ENCODE measurements at regions of chr4 and their contacts with region 1.

Region 1: DNA sequence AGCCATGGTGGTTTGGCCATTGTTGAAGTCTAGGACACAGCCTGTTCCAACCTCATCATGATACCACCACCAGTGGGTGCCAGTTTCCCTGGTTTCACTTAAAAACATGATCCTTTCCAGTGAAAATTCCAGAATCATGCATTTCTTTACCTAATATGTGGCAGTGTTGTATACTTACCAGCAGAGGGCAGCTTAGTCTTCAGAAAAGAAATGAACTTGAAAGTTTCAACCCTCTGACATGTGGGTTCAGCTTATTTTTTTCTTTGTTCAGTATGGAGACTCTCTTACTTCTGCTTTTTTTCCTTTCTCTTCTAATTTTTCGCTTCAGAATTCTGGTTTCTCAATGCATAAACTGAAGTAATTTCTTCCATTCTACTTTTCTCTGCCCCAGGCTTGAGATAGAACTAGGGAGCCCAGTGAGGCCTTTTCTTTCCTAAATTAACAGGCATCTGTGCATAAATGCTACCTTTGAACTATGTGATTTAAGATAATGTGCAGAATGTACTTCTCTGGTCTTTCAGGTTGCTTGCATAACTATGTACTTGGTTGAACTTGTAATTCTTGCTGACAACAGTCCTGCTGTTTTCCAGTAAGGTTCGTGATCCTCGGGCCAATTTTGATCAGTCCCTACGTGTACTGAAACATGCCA is 10.7 kb downstream of the LIAS start:
- DNase-seq: peak; percentile 85
- ATAC-seq: peak; percentile 91
- H3K4me3 ChIP-seq: no peak overlapping the region
- H3K27ac ChIP-seq: no peak overlapping the region
- H3K4me1 ChIP-seq: peaks cover 13% of the 10 kb centered on the region; the same call in 1 of the 2 replicates
- H3K27me3 ChIP-seq: no peaks in the 10 kb centered on the region
- CTCF ChIP-seq: peak; percentile 97

Region 2: DNA sequence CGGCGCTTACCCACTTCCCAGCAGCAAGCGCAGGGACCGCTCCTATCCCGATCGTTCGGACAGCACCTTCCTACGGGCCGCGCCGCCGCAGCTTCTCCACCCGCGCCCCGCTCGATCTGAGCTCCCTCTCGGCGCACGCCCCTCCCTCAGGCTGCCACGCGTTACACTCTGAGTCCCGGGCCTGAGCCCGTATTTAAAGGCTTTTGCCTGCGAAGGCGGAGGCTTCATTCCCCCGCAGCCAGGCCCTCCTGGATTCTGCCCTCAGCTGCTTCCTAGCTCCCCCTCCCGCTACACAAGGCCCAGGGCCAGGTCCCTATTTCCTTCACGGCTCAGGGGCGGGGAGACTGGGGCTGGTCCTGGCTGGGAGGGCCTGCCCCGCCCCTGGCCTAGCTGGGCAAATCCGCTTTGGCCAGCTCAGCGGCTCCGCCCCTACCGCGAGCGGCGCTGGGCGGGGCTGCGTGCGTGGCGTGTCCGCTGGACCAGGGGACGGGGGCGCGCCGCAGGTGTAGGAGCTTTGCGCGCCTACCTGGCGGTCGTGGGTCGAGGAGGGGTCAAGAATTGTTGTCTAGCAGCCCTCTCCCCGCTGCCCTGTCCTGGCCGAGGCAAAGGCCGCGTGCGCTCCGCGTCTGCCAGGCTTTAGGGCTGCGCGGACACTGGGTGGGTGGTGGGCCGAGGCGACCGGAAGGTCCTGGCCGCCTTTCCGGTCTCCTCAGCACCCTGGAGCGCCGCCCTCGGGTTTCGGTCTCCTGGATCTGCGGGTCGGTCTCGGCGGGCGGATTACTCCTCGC is 57.9 kb after region 1 on chr4 and contains the start of gene UGDH:
- CTCF ChIA-PET with region 1: interaction called, 6 read pairs
- POLR2A ChIA-PET with region 1: interaction called, 3 read pairs
- intact Hi-C with region 1: loop called (anchors 5 kb)
- DNase-seq: peak; percentile 95
- ATAC-seq: peak; percentile 87
- H3K4me3 ChIP-seq: peak within 1 kb of the TSS; percentile 95
- H3K27ac ChIP-seq: peak within 1 kb of the TSS; percentile 89
- H3K4me1 ChIP-seq: peaks cover 20% of the 10 kb centered on the region
- H3K27me3 ChIP-seq: no peaks in the 10 kb centered on the region
- CTCF ChIP-seq: no peak
- total RNA-seq, gene UGDH: 50.0 and 53.4 TPM in 2 replicates

Region 3: GRCh38 chr4:39591290-39591689 is 121.7 kb after region 1 on chr4:
- CTCF ChIA-PET with region 1: no interaction called
- POLR2A ChIA-PET with region 1: no interaction called
- intact Hi-C with region 1: loop called (anchors 1 kb)
- DNase-seq: peak; percentile 72
- ATAC-seq: peak; percentile 66
- H3K4me3 ChIP-seq: no peak overlapping the region
- H3K27ac ChIP-seq: no peak overlapping the region
- H3K4me1 ChIP-seq: no peaks in the 10 kb centered on the region
- H3K27me3 ChIP-seq: no peaks in the 10 kb centered on the region
- CTCF ChIP-seq: peak; percentile 65

Region 4: GRCh38 chr4:39638354-39639240 is 169.0 kb after region 1 on chr4 and contains the start of gene SMIM14:
- CTCF ChIA-PET with region 1: interaction called, 8 read pairs
- POLR2A ChIA-PET with region 1: interaction called, 12 read pairs
- intact Hi-C with region 1: loop called (anchors 2 kb)
- DNase-seq: peak; percentile 96
- ATAC-seq: peak; percentile 89
- H3K4me3 ChIP-seq: peak within 1 kb of the TSS; percentile 98
- H3K27ac ChIP-seq: peak within 1 kb of the TSS; percentile 95
- H3K4me1 ChIP-seq: peaks cover 23% of the 10 kb centered on the region
- H3K27me3 ChIP-seq: no peaks in the 10 kb centered on the region
- CTCF ChIP-seq: no peak
- total RNA-seq, gene SMIM14: 3.3 and 4.8 TPM in 2 replicates

Region 5: GRCh38 chr4:39658756-39659155 is 189.2 kb after region 1 on chr4:
- CTCF ChIA-PET with region 1: no interaction called
- POLR2A ChIA-PET with region 1: no interaction called
- intact Hi-C with region 1: loop called (anchors 2 kb)
- DNase-seq: no peak
- ATAC-seq: no peak
- H3K4me3 ChIP-seq: no peak overlapping the region
- H3K27ac ChIP-seq: no peak overlapping the region
- H3K4me1 ChIP-seq: no peaks in the 10 kb centered on the region
- H3K27me3 ChIP-seq: no peaks in the 10 kb centered on the region
- CTCF ChIP-seq: peak; percentile 42; the same call in 1 of the 2 replicates

Region 6: DNA sequence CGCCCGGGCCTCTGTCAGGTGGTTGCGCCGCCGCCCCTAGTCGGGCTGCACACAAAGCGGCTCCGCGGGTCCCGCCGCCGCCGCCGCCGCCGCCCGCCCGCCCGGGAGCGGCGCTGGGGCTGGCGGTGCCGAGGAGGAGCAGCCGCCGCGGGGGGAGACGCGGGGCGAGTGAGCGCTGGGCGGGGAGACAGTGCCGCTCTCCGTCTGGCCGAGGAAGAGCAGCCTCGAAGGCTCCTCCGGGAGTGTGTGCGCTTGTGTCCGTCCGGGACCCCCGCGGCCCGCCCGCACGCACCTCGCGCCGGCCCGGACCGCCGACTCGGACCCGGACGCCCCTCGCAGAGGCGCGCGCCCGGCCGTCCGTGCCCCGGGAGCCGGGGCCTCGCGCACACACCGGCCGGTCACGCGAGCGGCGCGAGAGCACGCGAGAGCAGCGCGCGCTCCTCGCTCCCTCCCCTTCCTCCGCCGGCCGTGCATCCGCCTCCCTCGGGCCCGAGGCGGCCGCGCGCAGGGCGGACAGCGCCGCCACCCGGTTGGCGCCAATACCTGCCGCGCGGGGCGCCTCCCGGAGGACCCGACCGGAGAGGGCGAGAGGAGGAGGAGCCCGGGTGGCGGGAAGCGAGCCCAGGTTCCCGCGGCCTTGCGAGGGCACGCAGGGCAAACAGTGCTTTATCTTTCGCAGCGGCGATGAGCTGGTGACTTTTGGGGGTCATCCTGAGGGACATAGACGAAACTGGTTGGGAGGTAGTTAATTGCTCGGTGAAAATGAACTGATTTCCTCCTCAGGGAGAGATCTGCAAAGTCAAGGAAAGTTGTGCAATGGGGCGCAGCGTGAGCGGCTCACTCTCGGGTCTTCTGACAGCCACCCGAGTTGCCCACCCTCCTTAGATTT is 508.2 kb after region 1 on chr4 and contains the start of gene PDS5A:
- CTCF ChIA-PET with region 1: no interaction called
- POLR2A ChIA-PET with region 1: no interaction called
- intact Hi-C with region 1: loop called (anchors 10 kb)
- DNase-seq: peak; percentile 91
- ATAC-seq: peak; percentile 78
- H3K4me3 ChIP-seq: peak within 1 kb of the TSS; percentile 96
- H3K27ac ChIP-seq: peak within 1 kb of the TSS; percentile 34
- H3K4me1 ChIP-seq: peaks cover 12% of the 10 kb centered on the region
- H3K27me3 ChIP-seq: no peaks in the 10 kb centered on the region
- CTCF ChIP-seq: peak; percentile 70
- total RNA-seq, gene PDS5A: 39.9 and 49.8 TPM in 2 replicates